ENCODE measurements at regions of chr12 and their contacts with region 1.

Region 1: GRCh38 chr12:102958073-102958829 is 777 bp downstream of the ASCL1 start:
- DNase-seq: peak in 1 of 2 donors; percentile 73
- H3K4me3 ChIP-seq: peak overlapping the region; percentile 38 to 53 (median 39)
- H3K27ac ChIP-seq: no peak overlapping the region
- H3K4me1 ChIP-seq: peaks cover 17 to 41% (median 33%) of the 10 kb centered on the region in 4 donors
- H3K27me3 ChIP-seq: peaks cover 24 to 99% (median 83%) of the 10 kb centered on the region in 3 donors
- CTCF ChIP-seq: no peak
- EP300 ChIP-seq: no peak
- POLR2A ChIP-seq: no peak

Region 2: GRCh38 chr12:102757154-102757881 is 200.9 kb before region 1 on chr12:
- intact Hi-C with region 1: no loop called
- DNase-seq: peak in 1 of 2 donors; percentile 39
- H3K4me3 ChIP-seq: no peak overlapping the region
- H3K27ac ChIP-seq: no peak overlapping the region
- H3K4me1 ChIP-seq: no peaks in the 10 kb centered on the region
- H3K27me3 ChIP-seq: no peaks in the 10 kb centered on the region
- CTCF ChIP-seq: no peak
- EP300 ChIP-seq: no peak
- POLR2A ChIP-seq: no peak

Region 3: GRCh38 chr12:103503977-103504376 is 545.7 kb after region 1 on chr12:
- intact Hi-C with region 1: loop called (anchors 10 kb)
- DNase-seq: peak; percentile 61 to 70
- H3K4me3 ChIP-seq: no peak overlapping the region
- H3K27ac ChIP-seq: no peak overlapping the region
- H3K4me1 ChIP-seq: no peaks in the 10 kb centered on the region
- H3K27me3 ChIP-seq: no peaks in the 10 kb centered on the region
- CTCF ChIP-seq: peak in 5 of 7 experiments; percentile 28 to 70 (median 51)
- EP300 ChIP-seq: no peak
- POLR2A ChIP-seq: no peak